Activated CD4-positive, alpha-beta memory T cell treated with anti-CD3 and anti-CD28 coated beads for 36 hours (primary cell): ENCODE measurements at regions of chr6 and their contacts with region 1.

Region 1: GRCh38 chr6:107674995-107675738 is 148.9 kb downstream of the SCML4 start:
- DNase-seq: peak; percentile 91
- H3K4me3 Mint-ChIP-seq: peak overlapping the region; percentile 57
- H3K27ac Mint-ChIP-seq: peak overlapping the region; percentile 69
- H3K4me1 Mint-ChIP-seq: peaks cover 12% of the 10 kb centered on the region
- H3K27me3 Mint-ChIP-seq: no peaks in the 10 kb centered on the region

Region 2: GRCh38 chr6:107318100-107318736 is 356.9 kb before region 1 on chr6:
- CTCF ChIA-PET with region 1: interaction called, 3 read pairs
- POLR2A ChIA-PET with region 1: no interaction called
- intact Hi-C with region 1: loop called (anchors 10 kb)
- DNase-seq: peak; percentile 44
- H3K4me3 Mint-ChIP-seq: no peak overlapping the region
- H3K27ac Mint-ChIP-seq: no peak overlapping the region
- H3K4me1 Mint-ChIP-seq: peaks cover 18% of the 10 kb centered on the region
- H3K27me3 Mint-ChIP-seq: no peaks in the 10 kb centered on the region

Region 3: DNA sequence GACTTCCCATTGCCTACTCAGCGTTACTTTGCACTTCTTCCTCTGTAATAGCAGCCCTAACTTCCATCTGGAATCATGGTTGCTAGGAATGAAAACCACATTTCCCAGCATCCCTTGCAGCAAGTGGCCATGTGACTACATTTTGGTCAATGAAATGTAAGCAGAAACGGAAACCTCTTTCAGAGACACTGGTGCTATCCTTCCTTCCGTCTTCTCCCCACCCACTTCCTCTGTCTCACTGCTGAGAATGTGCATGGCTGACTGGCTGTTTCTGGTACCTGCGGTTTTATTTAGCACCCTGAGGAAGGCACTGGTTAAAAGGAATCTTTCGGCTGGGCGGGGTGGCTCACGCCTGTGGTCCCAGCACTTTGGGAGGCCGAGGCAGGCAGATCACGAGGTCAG is 41.5 kb after region 1 on chr6:
- CTCF ChIA-PET with region 1: interaction called, 4 read pairs
- POLR2A ChIA-PET with region 1: no interaction called
- intact Hi-C with region 1: loop called (anchors 2 kb)
- DNase-seq: peak; percentile 86
- H3K4me3 Mint-ChIP-seq: peak overlapping the region; percentile 64
- H3K27ac Mint-ChIP-seq: peak overlapping the region; percentile 84
- H3K4me1 Mint-ChIP-seq: peaks cover 70% of the 10 kb centered on the region
- H3K27me3 Mint-ChIP-seq: no peaks in the 10 kb centered on the region

Region 4: DNA sequence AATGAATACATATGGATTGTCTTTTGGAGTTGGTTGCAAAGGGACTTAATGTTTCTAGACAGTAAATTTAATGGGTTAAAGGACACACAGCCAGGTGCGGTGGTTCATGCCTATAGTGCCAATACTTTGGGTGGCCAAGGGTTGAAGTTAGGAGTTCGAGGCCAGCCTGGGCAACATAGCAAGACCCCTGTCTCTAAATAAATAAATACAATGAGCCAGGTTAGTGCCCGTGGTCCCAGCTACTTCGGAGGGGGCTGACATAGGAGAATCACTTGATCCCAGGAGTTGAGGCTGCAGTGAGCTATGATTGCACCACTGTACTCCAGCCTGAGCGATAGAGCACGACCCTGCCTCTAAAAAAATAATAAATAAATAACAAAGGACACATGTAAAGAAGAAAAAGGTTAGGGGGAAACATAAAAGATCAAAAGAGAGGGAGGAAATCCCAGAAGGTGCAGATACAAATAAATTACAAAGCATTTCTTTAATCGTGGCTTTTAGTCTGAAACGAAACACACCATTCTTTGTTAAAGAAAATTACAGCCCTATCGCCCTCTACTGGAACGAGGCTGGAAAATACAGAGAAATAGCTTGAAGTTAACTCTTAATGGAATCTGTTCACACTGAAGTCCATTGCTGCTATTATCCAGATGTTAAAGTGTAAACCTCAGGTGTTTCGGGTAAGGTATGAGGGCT is 191.6 kb after region 1 on chr6:
- CTCF ChIA-PET with region 1: interaction called, 51 read pairs
- POLR2A ChIA-PET with region 1: no interaction called
- intact Hi-C with region 1: loop called (anchors 1 kb)
- DNase-seq: no peak
- H3K4me3 Mint-ChIP-seq: no peak overlapping the region
- H3K27ac Mint-ChIP-seq: no peak overlapping the region
- H3K4me1 Mint-ChIP-seq: peaks cover 13% of the 10 kb centered on the region
- H3K27me3 Mint-ChIP-seq: no peaks in the 10 kb centered on the region

Region 5: DNA sequence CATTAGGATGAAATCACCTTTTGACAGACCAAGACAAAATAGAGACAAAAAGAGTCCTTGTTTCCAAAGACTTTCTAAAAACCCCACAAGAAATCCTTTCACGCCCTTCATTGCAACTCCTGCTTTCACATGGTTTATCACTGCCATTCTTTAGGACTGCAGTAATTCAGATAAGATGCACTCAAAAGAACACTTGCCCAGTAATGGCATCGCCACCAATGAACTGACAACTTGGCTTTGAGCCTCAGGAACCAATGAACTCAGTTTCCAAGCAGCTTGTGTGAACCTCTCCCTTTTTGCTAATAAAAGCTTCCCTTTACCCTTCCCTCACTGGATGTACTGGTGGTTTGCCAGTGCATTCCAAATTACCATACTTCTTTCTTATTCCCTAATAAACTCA is 377.5 kb after region 1 on chr6:
- CTCF ChIA-PET with region 1: interaction called, 19 read pairs
- POLR2A ChIA-PET with region 1: no interaction called
- intact Hi-C with region 1: loop called (anchors 2 kb)
- DNase-seq: no peak
- H3K4me3 Mint-ChIP-seq: no peak overlapping the region
- H3K27ac Mint-ChIP-seq: no peak overlapping the region
- H3K4me1 Mint-ChIP-seq: no peaks in the 10 kb centered on the region
- H3K27me3 Mint-ChIP-seq: no peaks in the 10 kb centered on the region